ENCODE measurements at regions of chr5 and their contacts with region 1.

Region 1: GRCh38 chr5:55319491-55319890 is 11.7 kb downstream of the MTREX start:
- DNase-seq: no peak
- H3K4me3 ChIP-seq: no peak overlapping the region
- H3K27ac ChIP-seq: peak overlapping the region; percentile 42 to 54
- H3K4me1 ChIP-seq: peaks cover 0 to 6% of the 10 kb centered on the region in 2 donors
- H3K27me3 ChIP-seq: no peaks in the 10 kb centered on the region
- CTCF ChIP-seq: no peak

Region 2: GRCh38 chr5:55159763-55160492 is 159.6 kb before region 1 on chr5 and contains the start of gene GPX8:
- intact Hi-C with region 1: no loop called
- DNase-seq: no peak
- H3K4me3 ChIP-seq: peak within 1 kb of the TSS; percentile 47 to 58
- H3K27ac ChIP-seq: peak within 1 kb of the TSS; percentile 54 to 67
- H3K4me1 ChIP-seq: no peaks in the 10 kb centered on the region
- H3K27me3 ChIP-seq: no peaks in the 10 kb centered on the region
- CTCF ChIP-seq: peak; percentile 46 to 71 (median 64)
- total RNA-seq, gene GPX8: 27.9 TPM

Region 3: GRCh38 chr5:55294935-55295334 is 24.6 kb before region 1 on chr5:
- intact Hi-C with region 1: no loop called
- DNase-seq: no peak
- H3K4me3 ChIP-seq: no peak overlapping the region
- H3K27ac ChIP-seq: no peak overlapping the region
- H3K4me1 ChIP-seq: no peaks in the 10 kb centered on the region
- H3K27me3 ChIP-seq: no peaks in the 10 kb centered on the region
- CTCF ChIP-seq: no peak

Region 4: DNA sequence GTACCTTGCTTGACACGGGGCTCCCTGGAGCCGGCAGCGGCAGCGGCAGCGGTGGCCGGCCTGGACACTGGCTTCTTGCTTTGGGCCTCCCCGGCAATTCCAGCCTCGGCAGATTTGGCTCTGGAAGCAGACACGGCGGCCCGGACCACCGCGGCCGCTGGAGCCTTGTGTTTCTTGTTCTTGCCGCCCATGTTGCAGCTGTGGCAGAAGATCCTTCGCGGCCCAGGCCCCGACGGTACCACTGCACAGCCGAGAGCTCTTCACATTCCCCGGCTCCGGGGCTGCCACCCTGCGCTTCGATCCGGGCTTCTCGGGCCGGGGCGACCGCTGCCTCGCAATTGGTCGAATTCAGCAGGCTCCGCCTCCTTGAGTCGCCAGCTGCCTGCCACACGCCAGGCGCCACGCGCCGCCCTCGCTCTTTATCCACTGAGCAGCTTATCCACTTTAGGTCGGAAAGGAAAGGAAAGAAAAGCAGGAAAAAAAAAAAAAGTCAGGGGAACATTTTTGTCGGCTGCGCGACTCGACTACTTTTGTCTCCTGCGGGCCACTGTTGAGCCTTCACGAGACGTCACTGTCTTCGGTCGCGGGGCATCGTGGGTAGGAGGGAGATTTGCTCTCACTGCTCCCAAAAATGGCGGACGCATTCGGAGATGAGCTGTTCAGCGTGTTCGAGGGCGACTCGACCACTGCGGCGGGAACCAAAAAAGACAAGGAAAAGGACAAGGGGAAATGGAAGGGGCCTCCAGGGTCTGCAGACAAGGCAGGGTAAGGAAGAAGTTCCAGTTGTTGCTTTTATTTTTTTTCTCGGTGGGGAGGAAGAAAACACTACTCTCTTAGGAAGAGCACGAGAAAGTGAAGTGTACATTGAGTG is 11.9 kb before region 1 on chr5 and contains the starts of genes DHX29 and MTREX:
- intact Hi-C with region 1: loop called (anchors 1 kb)
- DNase-seq: peak; percentile 71 to 95
- H3K4me3 ChIP-seq: peak within 1 kb of the TSS; percentile 76 to 92
- H3K27ac ChIP-seq: peak within 1 kb of the TSS; percentile 80 to 87
- H3K4me1 ChIP-seq: peaks cover 12 to 44% of the 10 kb centered on the region in 2 donors
- H3K27me3 ChIP-seq: no peaks in the 10 kb centered on the region
- CTCF ChIP-seq: no peak
- total RNA-seq, gene DHX29: 11.3 TPM
- total RNA-seq, gene MTREX: 17.1 TPM

Region 5: DNA sequence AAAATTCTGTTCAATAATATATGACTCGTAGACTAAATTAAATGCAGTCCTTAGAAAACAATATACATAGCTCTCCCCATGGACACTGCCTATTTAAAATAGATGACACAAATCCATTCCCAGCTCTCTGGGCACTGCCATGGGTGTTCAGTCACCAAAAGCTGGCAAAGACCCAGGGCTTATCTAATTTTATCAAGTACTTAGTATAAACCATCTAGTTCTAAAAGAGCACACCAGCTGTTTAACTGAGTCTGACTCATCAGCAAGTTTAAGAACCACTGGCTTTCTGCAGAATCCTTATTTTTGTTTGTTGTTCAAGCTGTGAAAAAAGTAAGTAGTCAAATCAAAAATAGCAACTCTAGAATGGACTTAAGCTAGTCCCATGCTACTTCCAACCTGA is 107.7 kb after region 1 on chr5:
- intact Hi-C with region 1: no loop called
- DNase-seq: peak in 1 of 2 donors; percentile 75
- H3K4me3 ChIP-seq: no peak overlapping the region
- H3K27ac ChIP-seq: peak overlapping the region; percentile 17 to 63
- H3K4me1 ChIP-seq: peaks cover 0 to 16% of the 10 kb centered on the region in 2 donors
- H3K27me3 ChIP-seq: no peaks in the 10 kb centered on the region
- CTCF ChIP-seq: no peak

Region 6: DNA sequence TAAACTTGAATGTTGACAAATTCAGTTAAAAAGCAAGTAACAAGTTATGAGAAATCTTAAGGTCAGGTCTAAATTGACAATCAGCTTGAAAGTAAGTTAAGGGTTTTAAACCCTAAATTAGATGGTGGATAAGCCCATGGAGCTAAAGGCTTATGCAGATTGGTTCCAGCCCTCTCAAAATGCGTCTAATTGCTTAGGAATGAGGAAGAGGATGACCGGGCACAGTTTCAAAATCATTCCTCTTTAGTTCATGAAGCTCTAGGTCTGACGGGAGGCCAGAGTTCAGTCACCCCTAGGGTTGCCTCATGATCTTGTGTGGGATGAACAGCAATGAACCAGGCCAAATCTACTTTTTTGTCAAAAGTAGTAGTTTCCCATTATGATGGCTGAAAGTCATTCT is 317.2 kb after region 1 on chr5:
- intact Hi-C with region 1: no loop called
- DNase-seq: no peak
- H3K4me3 ChIP-seq: no peak overlapping the region
- H3K27ac ChIP-seq: peak overlapping the region; percentile 13 to 53
- H3K4me1 ChIP-seq: peaks cover 0 to 26% of the 10 kb centered on the region in 2 donors
- H3K27me3 ChIP-seq: no peaks in the 10 kb centered on the region
- CTCF ChIP-seq: no peak

Measured in ascending aorta (tissue), 2 donors.